ENCODE measurements at regions of chr13 and their contacts with region 1.

Region 1: GRCh38 chr13:49443704-49444523 is at the starts of genes CAB39L and SETDB2:
- DNase-seq: peak; percentile 94
- H3K4me3 ChIP-seq: peak within 1 kb of the TSS; percentile 84 to 88
- H3K27ac ChIP-seq: peak within 1 kb of the TSS; percentile 95 to 98
- H3K4me1 ChIP-seq: peaks cover 0 to 3% of the 10 kb centered on the region in 2 experiments; a peak in 2 of 4 replicates
- H3K27me3 ChIP-seq: no peaks in the 10 kb centered on the region
- CTCF ChIP-seq: peak; percentile 38
- EP300 ChIP-seq: no peak
- RAD21 ChIP-seq: peak; percentile 9; the same call in 1 of the 2 replicates
- polyA plus RNA-seq, gene CAB39L: 2.6 and 3.3 TPM in 2 replicates
- polyA plus RNA-seq, gene SETDB2: 1.9 and 2.4 TPM in 2 replicates

Region 2: DNA sequence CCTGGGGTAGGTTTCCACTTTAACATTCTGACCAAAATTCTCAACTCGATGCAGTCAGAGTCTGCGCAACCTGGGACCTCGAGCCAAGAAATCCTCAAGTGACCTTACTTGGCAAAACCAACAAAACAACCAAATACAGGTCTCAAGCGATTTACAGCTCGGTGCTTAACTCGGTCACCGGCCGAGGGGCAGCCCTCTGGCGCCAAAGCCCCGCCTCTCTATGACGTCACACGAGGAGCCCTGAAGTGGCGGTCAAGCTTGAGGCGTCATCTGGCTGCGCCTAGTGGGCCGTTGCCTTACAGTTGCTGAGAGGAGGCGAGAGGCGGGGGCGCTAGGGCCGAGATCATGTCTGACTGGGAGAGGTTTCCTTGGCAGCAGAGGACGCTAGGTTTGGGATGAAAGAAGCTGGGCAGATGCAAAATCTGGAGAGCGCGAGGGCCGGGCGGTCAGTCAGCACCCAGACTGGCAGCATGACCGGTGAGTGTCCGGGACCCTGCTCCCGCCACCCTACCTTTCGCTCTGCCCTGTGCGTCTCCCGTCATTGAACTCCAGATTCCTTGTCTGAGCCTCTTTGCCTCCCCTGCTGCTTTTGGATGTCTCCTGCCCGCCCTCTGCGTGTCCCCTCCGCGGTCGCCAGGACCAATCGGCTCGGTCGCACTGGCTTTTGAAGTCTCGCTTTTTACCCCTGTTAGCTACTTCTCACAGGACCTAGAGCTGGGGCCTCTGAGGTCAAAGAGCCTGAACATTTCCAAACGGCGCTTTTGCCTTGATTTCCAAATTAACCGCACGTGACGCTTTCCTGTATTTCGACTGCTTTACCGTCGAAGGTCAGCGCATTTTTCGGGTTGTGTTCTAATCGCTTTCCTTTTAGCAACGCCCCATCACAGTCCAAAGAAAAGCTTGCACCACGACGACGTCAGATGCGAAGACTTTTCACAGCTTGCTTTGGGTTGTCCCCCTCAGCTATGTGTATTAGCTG is 196.0 kb before region 1 on chr13 and contains the start of gene CDADC1:
- CTCF ChIA-PET with region 1: no interaction called
- POLR2A ChIA-PET with region 1: interaction called, 14 read pairs
- DNase-seq: peak; percentile 88
- H3K4me3 ChIP-seq: peak within 1 kb of the TSS; percentile 71 to 75
- H3K27ac ChIP-seq: peak within 1 kb of the TSS; percentile 67 to 71
- H3K4me1 ChIP-seq: peaks cover 0 to 4% of the 10 kb centered on the region in 2 experiments; a peak in 2 of 4 replicates
- H3K27me3 ChIP-seq: no peaks in the 10 kb centered on the region
- CTCF ChIP-seq: no peak
- EP300 ChIP-seq: no peak
- RAD21 ChIP-seq: no peak
- polyA plus RNA-seq, gene CDADC1: 3.2 and 3.5 TPM in 2 replicates

Region 3: DNA sequence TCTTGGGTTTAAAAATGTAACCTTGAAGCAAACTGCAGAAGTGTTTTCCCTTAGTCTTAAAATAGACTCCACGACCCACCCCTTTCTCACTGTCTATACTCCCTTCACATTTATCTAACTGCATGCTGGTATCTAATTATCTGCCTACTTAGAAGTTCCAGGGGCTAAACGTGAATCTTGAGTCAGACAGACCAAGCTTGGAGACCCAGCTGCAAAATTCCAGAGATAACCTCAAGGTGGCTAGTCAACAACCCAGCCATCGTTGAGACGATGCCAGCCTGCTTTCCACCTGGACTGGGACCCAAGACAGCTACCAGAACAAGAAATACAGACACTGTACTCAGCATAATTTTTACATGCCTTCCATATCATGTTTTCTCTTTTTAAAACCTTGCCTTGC is 114.1 kb before region 1 on chr13:
- CTCF ChIA-PET with region 1: no interaction called
- POLR2A ChIA-PET with region 1: no interaction called
- DNase-seq: no peak
- H3K4me3 ChIP-seq: no peak overlapping the region
- H3K27ac ChIP-seq: no peak overlapping the region
- H3K4me1 ChIP-seq: no peaks in the 10 kb centered on the region
- H3K27me3 ChIP-seq: no peaks in the 10 kb centered on the region
- CTCF ChIP-seq: no peak
- EP300 ChIP-seq: no peak
- RAD21 ChIP-seq: no peak

Region 4: GRCh38 chr13:49585220-49586157 is 141.6 kb after region 1 on chr13 and contains the start of gene RCBTB1:
- CTCF ChIA-PET with region 1: no interaction called
- POLR2A ChIA-PET with region 1: interaction called, 12 read pairs
- DNase-seq: peak; percentile 99
- H3K4me3 ChIP-seq: peak within 1 kb of the TSS; percentile 78 to 96
- H3K27ac ChIP-seq: peak within 1 kb of the TSS; percentile 74 to 82
- H3K4me1 ChIP-seq: peaks cover 0 to 6% of the 10 kb centered on the region in 2 experiments; a peak in 2 of 4 replicates
- H3K27me3 ChIP-seq: no peaks in the 10 kb centered on the region
- CTCF ChIP-seq: no peak
- EP300 ChIP-seq: no peak
- RAD21 ChIP-seq: no peak
- polyA plus RNA-seq, gene RCBTB1: 13.2 and 13.8 TPM in 2 replicates

Region 5: GRCh38 chr13:49784886-49785570 is 341.1 kb after region 1 on chr13:
- CTCF ChIA-PET with region 1: no interaction called
- POLR2A ChIA-PET with region 1: no interaction called
- DNase-seq: no peak
- H3K4me3 ChIP-seq: no peak overlapping the region
- H3K27ac ChIP-seq: no peak overlapping the region
- H3K4me1 ChIP-seq: peaks cover 4 to 5% of the 10 kb centered on the region in 2 experiments; a peak in 1 of 4 replicates
- H3K27me3 ChIP-seq: no peaks in the 10 kb centered on the region
- CTCF ChIP-seq: no peak
- EP300 ChIP-seq: no peak
- RAD21 ChIP-seq: no peak